PC-3 (cell line): ENCODE measurements at regions of chr6 and their contacts with region 1.

Region 1: GRCh38 chr6:77457720-77458349 is 5.5 kb downstream of the HTR1B start:
- DNase-seq: peak; percentile 62
- ATAC-seq: peak; percentile 59; the same call in 1 of the 2 replicates
- H3K4me3 ChIP-seq: no peak overlapping the region
- H3K27ac ChIP-seq: no peak overlapping the region
- H3K4me1 ChIP-seq: peaks cover 3% of the 10 kb centered on the region
- H3K27me3 ChIP-seq: no peaks in the 10 kb centered on the region
- CTCF ChIP-seq: peak; percentile 61

Region 2: GRCh38 chr6:75893058-75893775 is 1564.6 kb before region 1 on chr6:
- CTCF ChIA-PET with region 1: no interaction called
- POLR2A ChIA-PET with region 1: no interaction called
- intact Hi-C with region 1: loop called (anchors 5 kb)
- DNase-seq: peak; percentile 78
- ATAC-seq: peak; percentile 33
- H3K4me3 ChIP-seq: no peak overlapping the region
- H3K27ac ChIP-seq: no peak overlapping the region
- H3K4me1 ChIP-seq: no peaks in the 10 kb centered on the region
- H3K27me3 ChIP-seq: no peaks in the 10 kb centered on the region
- CTCF ChIP-seq: peak; percentile 70

Region 3: DNA sequence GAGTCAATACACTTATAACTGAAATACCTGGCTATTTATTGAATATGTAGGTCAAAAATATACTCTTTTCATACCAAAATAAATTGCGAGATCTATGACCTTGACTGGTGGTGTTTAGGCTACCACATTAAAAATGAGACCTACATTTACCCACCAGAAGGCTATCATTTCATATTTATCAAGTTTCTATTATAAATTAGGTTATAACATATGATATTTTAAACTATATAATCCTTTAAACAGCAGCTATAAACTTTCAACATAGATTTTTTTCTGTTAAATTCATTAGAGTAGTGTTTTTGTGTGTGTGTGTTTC is 580.6 kb before region 1 on chr6:
- CTCF ChIA-PET with region 1: no interaction called
- POLR2A ChIA-PET with region 1: no interaction called
- intact Hi-C with region 1: loop called (anchors 10 kb)
- DNase-seq: no peak
- ATAC-seq: no peak
- H3K4me3 ChIP-seq: no peak overlapping the region
- H3K27ac ChIP-seq: no peak overlapping the region
- H3K4me1 ChIP-seq: no peaks in the 10 kb centered on the region
- H3K27me3 ChIP-seq: no peaks in the 10 kb centered on the region
- CTCF ChIP-seq: no peak

Region 4: GRCh38 chr6:77021232-77021631 is 436.6 kb before region 1 on chr6:
- CTCF ChIA-PET with region 1: no interaction called
- POLR2A ChIA-PET with region 1: no interaction called
- intact Hi-C with region 1: loop called (anchors 5 kb)
- DNase-seq: no peak
- ATAC-seq: no peak
- H3K4me3 ChIP-seq: no peak overlapping the region
- H3K27ac ChIP-seq: no peak overlapping the region
- H3K4me1 ChIP-seq: no peaks in the 10 kb centered on the region
- H3K27me3 ChIP-seq: no peaks in the 10 kb centered on the region
- CTCF ChIP-seq: no peak

Region 5: GRCh38 chr6:77245026-77245425 is 212.8 kb before region 1 on chr6:
- CTCF ChIA-PET with region 1: no interaction called
- POLR2A ChIA-PET with region 1: no interaction called
- intact Hi-C with region 1: loop called (anchors 10 kb)
- DNase-seq: no peak
- ATAC-seq: no peak
- H3K4me3 ChIP-seq: no peak overlapping the region
- H3K27ac ChIP-seq: no peak overlapping the region
- H3K4me1 ChIP-seq: no peaks in the 10 kb centered on the region
- H3K27me3 ChIP-seq: no peaks in the 10 kb centered on the region
- CTCF ChIP-seq: no peak